Heart left ventricle (tissue), 16 donors: ENCODE measurements at regions of chr2 and their contacts with region 1.

Region 1: GRCh38 chr2:160194946-160195345 is 5.1 kb downstream of the ITGB6 start:
- DNase-seq: no peak
- ATAC-seq: no peak
- H3K4me3 ChIP-seq: no peak overlapping the region
- H3K27ac ChIP-seq: no peak overlapping the region
- H3K4me1 ChIP-seq: no peaks in the 10 kb centered on the region
- H3K27me3 ChIP-seq: no peaks in the 10 kb centered on the region
- CTCF ChIP-seq: no peak
- POLR2A ChIP-seq: no peak

Region 2: DNA sequence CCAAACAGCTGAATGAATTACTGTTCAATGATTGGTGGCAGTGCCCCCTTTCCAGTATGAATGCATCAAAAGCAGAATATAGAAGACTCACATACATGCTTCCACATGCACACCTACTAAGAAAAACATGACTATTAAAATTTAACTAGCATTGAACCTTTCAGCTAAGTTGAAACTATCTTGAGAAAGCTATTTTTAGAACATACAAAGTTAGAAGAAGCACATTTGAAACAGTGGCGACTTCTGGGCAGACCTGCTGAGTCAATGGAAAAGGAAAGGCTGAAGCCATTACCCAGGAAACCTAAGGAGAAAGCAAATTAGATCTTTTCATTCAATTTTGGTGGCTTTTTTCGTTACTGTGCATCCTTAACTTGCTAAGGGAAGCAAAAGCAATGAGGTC is 188.5 kb before region 1 on chr2:
- intact Hi-C with region 1: no loop called
- DNase-seq: no peak
- ATAC-seq: no peak
- H3K4me3 ChIP-seq: no peak overlapping the region
- H3K27ac ChIP-seq: no peak overlapping the region
- H3K4me1 ChIP-seq: peaks cover 0 to 19% (median 5%) of the 10 kb centered on the region in 12 donors
- H3K27me3 ChIP-seq: no peaks in the 10 kb centered on the region
- CTCF ChIP-seq: no peak
- POLR2A ChIP-seq: no peak

Region 3: GRCh38 chr2:160125828-160126227 is 69.1 kb before region 1 on chr2:
- intact Hi-C with region 1: loop called in 1 of 10 experiments (anchors 5 kb)
- DNase-seq: no peak
- ATAC-seq: no peak
- H3K4me3 ChIP-seq: no peak overlapping the region
- H3K27ac ChIP-seq: no peak overlapping the region
- H3K4me1 ChIP-seq: no peaks in the 10 kb centered on the region
- H3K27me3 ChIP-seq: no peaks in the 10 kb centered on the region
- CTCF ChIP-seq: no peak
- POLR2A ChIP-seq: no peak